HCT116 (cell line): ENCODE measurements at regions of chr6 and their contacts with region 1.

Region 1: DNA sequence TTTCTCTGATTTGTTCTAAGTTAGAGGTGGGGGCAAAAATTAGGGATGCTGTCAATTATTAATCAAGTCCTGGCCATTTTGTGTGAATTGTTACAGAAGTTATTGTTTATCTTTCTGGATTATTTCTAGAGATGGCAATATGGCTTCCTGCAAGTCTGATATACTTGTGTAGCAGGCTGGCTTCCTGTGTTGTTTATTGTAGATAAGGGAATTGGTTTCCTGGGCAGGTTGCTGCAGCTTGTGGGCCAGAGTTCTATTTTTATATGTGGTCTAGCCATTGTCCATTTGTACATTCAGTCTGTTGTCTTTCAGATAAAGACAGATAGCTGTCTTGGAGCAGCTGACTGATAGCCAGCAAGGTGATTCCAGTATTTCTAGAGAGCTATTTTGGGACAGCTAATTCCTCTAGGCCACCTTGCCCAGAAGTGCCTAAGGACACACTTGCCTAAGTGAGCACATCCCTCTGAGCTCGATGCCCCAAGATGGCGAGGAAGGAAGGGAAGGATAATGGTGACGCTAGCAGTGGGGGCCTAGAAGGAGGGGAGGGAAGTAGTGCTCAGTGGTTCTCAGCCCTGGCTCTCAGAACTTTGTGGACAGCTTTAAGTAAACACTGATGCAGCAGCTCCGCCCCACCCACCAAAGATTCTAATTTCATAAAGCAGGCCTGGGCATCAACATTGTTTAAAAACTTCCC is 25.5 kb downstream of the DDO start:
- DNase-seq: no peak
- ATAC-seq: no peak
- H3K4me3 ChIP-seq: no peak overlapping the region
- H3K27ac ChIP-seq: no peak overlapping the region
- H3K4me1 ChIP-seq: no peaks in the 10 kb centered on the region
- H3K27me3 ChIP-seq: no peaks in the 10 kb centered on the region
- CTCF ChIP-seq: no peak
- POLR2A ChIP-seq: no peak
- RAD21 ChIP-seq: no peak

Region 2: DNA sequence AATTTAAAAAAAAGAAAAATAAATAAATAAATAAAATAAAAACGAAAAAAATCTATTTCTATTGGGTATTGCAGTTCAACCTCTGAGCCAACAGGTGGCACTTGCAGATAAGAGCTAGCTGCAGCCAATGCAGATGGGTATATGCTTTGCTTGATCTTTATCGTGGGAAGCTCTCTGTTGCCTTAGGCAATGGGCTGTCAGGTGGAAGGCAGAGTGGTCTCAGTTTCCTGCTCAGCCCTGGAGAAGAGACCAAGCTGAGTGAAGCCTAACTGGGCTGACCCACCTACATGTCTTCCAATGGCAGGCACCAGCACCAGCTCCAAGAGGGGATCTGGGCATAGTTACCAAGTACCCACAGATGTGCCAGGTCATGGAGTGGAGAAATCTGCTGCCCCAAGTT is 793.8 kb before region 1 on chr6:
- CTCF ChIA-PET with region 1: interaction called, 3 read pairs
- POLR2A ChIA-PET with region 1: no interaction called
- RAD21 ChIA-PET with region 1: no interaction called
- intact Hi-C with region 1: loop called (anchors 5 kb)
- DNase-seq: peak; percentile 18
- ATAC-seq: peak; percentile 72
- H3K4me3 ChIP-seq: no peak overlapping the region
- H3K27ac ChIP-seq: no peak overlapping the region
- H3K4me1 ChIP-seq: no peaks in the 10 kb centered on the region
- H3K27me3 ChIP-seq: no peaks in the 10 kb centered on the region
- CTCF ChIP-seq: peak; percentile 37 to 60 (median 51); a peak in 4 of 6 replicates
- POLR2A ChIP-seq: no peak
- RAD21 ChIP-seq: peak; percentile 64

Region 3: GRCh38 chr6:109892436-109893435 is 497.1 kb before region 1 on chr6:
- CTCF ChIA-PET with region 1: no interaction called
- POLR2A ChIA-PET with region 1: no interaction called
- RAD21 ChIA-PET with region 1: no interaction called
- intact Hi-C with region 1: loop called (anchors 1 kb)
- DNase-seq: peak; percentile 82
- ATAC-seq: peak; percentile 84
- H3K4me3 ChIP-seq: peak overlapping the region; percentile 20 to 35
- H3K27ac ChIP-seq: peak overlapping the region; percentile 40
- H3K4me1 ChIP-seq: peaks cover 14 to 32% of the 10 kb centered on the region in 2 experiments
- H3K27me3 ChIP-seq: no peaks in the 10 kb centered on the region
- CTCF ChIP-seq: peak; percentile 53 to 73 (median 60)
- POLR2A ChIP-seq: no peak
- RAD21 ChIP-seq: peak; percentile 85

Region 4: DNA sequence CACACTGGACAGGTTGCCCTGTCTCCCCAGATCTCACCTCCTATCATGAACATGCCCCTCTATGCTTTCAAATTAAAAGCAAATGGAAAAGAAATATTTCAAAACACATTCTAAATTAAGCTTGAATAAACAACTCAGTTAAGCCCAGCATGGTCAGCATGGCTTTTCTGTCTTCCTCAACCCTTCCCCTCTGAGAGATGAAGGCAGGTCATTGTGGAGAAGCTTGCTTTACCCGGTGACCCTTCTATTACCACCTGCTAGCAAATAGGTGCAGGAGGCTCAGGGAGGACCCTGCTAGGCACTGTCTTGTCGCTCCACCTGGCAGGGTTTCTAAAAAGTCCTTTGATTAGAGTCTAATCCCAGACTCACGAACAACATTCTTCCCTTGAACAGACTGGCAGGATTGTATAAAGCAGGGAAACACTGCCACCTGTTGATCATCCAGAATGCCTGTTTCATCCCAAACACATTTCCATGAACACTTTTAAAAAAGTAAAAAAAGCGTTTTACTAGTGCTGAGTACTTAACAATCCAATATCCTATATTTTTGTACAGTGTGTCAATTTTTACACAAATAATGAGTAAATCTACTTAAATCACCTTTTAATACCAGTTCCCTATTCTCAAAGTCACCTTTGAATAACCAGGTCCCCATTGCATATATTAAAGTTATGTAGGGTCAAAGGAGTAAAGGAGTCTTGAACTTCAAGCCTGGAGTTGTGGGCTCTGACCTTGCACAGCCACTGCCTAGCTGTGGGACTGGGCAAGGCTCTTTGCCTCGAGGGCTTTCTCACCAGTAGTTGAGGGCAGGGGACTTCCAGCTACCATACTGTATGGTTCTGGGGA is 336.2 kb before region 1 on chr6:
- CTCF ChIA-PET with region 1: no interaction called
- POLR2A ChIA-PET with region 1: no interaction called
- RAD21 ChIA-PET with region 1: no interaction called
- intact Hi-C with region 1: loop called (anchors 2 kb)
- DNase-seq: peak; percentile 40
- ATAC-seq: peak; percentile 81
- H3K4me3 ChIP-seq: no peak overlapping the region
- H3K27ac ChIP-seq: no peak overlapping the region
- H3K4me1 ChIP-seq: no peaks in the 10 kb centered on the region
- H3K27me3 ChIP-seq: peaks cover 4% of the 10 kb centered on the region; the same call in 1 of the 2 replicates
- CTCF ChIP-seq: peak; percentile 73 to 87 (median 82)
- POLR2A ChIP-seq: no peak
- RAD21 ChIP-seq: peak; percentile 86

Region 5: DNA sequence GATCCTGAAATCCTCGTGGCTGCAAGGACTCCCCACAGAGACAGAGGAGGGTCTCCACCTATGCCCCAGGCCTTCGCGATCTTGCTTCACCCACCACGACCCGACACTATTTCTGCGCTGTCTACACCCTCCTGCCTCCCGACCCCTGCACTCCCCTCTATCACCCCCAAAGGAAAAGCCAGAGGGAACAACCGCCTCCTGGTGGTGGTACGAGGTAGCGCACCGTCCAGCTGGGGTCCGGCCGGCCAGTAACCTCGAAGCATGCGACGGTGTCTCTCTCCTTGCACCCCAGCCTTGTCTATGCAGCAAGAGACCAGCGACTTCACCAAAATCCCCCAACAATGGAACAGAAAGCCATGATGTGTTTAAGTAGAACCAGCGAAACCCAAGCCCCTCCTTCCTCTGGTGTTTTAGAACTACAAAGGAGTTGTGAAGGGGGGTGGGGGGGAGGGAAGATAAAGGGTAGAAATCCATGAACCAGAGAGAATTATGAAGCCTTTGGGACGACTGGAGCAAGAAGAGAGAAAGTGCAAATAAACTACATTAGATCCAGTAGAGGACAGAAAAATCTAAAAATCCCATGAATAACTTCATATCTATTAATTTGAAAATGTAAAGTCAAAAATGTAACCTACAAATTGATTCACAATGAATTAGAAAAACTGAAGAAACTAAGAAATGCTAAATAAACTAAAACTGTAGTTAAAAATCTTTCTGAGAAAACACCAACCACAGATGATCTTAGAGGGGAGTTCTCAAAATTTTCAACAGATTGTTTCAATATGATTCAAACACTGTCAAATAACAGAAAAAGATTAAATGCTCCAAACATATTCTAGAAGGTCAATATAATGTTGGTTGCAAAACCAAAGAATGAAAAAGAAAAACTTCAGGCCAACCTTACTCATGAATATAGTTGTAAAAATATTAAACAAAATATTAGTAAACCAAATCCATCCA is 257.4 kb after region 1 on chr6:
- CTCF ChIA-PET with region 1: no interaction called
- POLR2A ChIA-PET with region 1: no interaction called
- RAD21 ChIA-PET with region 1: no interaction called
- intact Hi-C with region 1: no loop called
- DNase-seq: no peak
- ATAC-seq: no peak
- H3K4me3 ChIP-seq: no peak overlapping the region
- H3K27ac ChIP-seq: no peak overlapping the region
- H3K4me1 ChIP-seq: no peaks in the 10 kb centered on the region
- H3K27me3 ChIP-seq: no peaks in the 10 kb centered on the region
- CTCF ChIP-seq: peak in 2 of 3 experiments; percentile 64 to 66; a peak in 4 of 6 replicates
- POLR2A ChIP-seq: no peak
- RAD21 ChIP-seq: no peak